ENCODE measurements at regions of chr10 and their contacts with region 1.

Region 1: GRCh38 chr10:131981429-131982184 is at the start of gene BNIP3:
- DNase-seq: peak; percentile 98
- ATAC-seq: peak; percentile 90
- H3K4me3 Mint-ChIP-seq: peak within 1 kb of the TSS; percentile 87
- H3K27ac Mint-ChIP-seq: peak within 1 kb of the TSS; percentile 35
- H3K4me1 Mint-ChIP-seq: peaks cover 10% of the 10 kb centered on the region
- H3K27me3 Mint-ChIP-seq: peaks cover 2% of the 10 kb centered on the region
- CTCF ChIP-seq: no peak
- total RNA-seq, gene BNIP3: 9.9 and 10.6 TPM in 2 replicates

Region 2: GRCh38 chr10:131900350-131901146 is 81.1 kb before region 1 on chr10 and contains the start of gene PPP2R2D:
- CTCF ChIA-PET with region 1: no interaction called
- POLR2A ChIA-PET with region 1: interaction called, 9 read pairs
- intact Hi-C with region 1: loop called (anchors 1 kb)
- DNase-seq: peak; percentile 96
- ATAC-seq: peak; percentile 91
- H3K4me3 Mint-ChIP-seq: peak within 1 kb of the TSS; percentile 89
- H3K27ac Mint-ChIP-seq: peak within 1 kb of the TSS; percentile 82
- H3K4me1 Mint-ChIP-seq: peaks cover 39% of the 10 kb centered on the region
- H3K27me3 Mint-ChIP-seq: peaks cover 6% of the 10 kb centered on the region
- CTCF ChIP-seq: no peak
- total RNA-seq, gene PPP2R2D: 28.0 and 32.7 TPM in 2 replicates

Region 3: GRCh38 chr10:132396495-132397035 is 415.0 kb after region 1 on chr10:
- CTCF ChIA-PET with region 1: no interaction called
- POLR2A ChIA-PET with region 1: no interaction called
- intact Hi-C with region 1: loop called (anchors 5 kb)
- DNase-seq: peak; percentile 74
- ATAC-seq: peak; percentile 71
- H3K4me3 Mint-ChIP-seq: no peak overlapping the region
- H3K27ac Mint-ChIP-seq: no peak overlapping the region
- H3K4me1 Mint-ChIP-seq: peaks cover 59% of the 10 kb centered on the region
- H3K27me3 Mint-ChIP-seq: no peaks in the 10 kb centered on the region
- CTCF ChIP-seq: no peak